ENCODE measurements at regions of chr2 and their contacts with region 1.

Region 1: DNA sequence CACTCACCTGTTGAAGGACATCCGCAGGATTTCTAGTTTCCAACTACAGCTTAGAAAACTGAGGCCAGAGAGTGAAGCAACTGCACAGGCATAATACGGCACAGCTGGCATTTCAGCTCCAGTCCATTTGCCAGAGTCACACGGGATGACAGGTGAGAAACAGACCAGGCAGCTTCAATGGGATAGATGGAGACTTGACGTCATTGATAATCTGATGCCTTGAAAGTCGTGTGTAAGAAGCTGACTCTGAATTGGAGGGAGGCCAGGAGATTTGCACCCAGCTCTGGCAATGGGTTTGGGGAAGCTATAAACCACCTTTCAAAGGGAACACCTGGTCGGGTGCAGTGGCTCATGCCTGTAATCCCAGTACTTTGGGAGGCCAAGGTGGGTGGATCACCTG is 12.4 kb upstream of the DNMT3A start:
- DNase-seq: no peak
- CTCF ChIP-seq: no peak

Region 2: GRCh38 chr2:25342372-25343186 is 11.5 kb before region 1 on chr2:
- CTCF ChIA-PET with region 1: interaction called, 13 read pairs
- POLR2A ChIA-PET with region 1: interaction called, 3 read pairs
- DNase-seq: peak; percentile 93
- CTCF ChIP-seq: peak; percentile 96

Measured in GM10248 (cell line).